ENCODE measurements at regions of chr10 and their contacts with region 1.

Region 1: GRCh38 chr10:33735464-33735923 is 401.0 kb upstream of the NRP1 start:
- DNase-seq: no peak
- ATAC-seq: peak; percentile 55
- H3K4me3 ChIP-seq: no peak overlapping the region
- H3K27ac ChIP-seq: no peak overlapping the region
- H3K4me1 ChIP-seq: no peaks in the 10 kb centered on the region
- H3K27me3 ChIP-seq: no peaks in the 10 kb centered on the region
- CTCF ChIP-seq: no peak
- EP300 ChIP-seq: no peak
- POLR2A ChIP-seq: no peak
- RAD21 ChIP-seq: no peak

Region 2: GRCh38 chr10:33715303-33715975 is 20.1 kb before region 1 on chr10:
- CTCF ChIA-PET with region 1: no interaction called
- POLR2A ChIA-PET with region 1: no interaction called
- RAD21 ChIA-PET with region 1: interaction called, 4 read pairs
- SMC1A ChIA-PET with region 1: interaction called, 17 read pairs
- in situ Hi-C with region 1: no loop called
- intact Hi-C with region 1: no loop called
- DNase-seq: no peak
- ATAC-seq: peak; percentile 77
- H3K4me3 ChIP-seq: no peak overlapping the region
- H3K27ac ChIP-seq: no peak overlapping the region
- H3K4me1 ChIP-seq: no peaks in the 10 kb centered on the region
- H3K27me3 ChIP-seq: no peaks in the 10 kb centered on the region
- CTCF ChIP-seq: no peak
- EP300 ChIP-seq: no peak
- POLR2A ChIP-seq: no peak
- RAD21 ChIP-seq: no peak

Region 3: GRCh38 chr10:33837736-33838135 is 102.2 kb after region 1 on chr10:
- CTCF ChIA-PET with region 1: no interaction called
- POLR2A ChIA-PET with region 1: no interaction called
- RAD21 ChIA-PET with region 1: no interaction called
- SMC1A ChIA-PET with region 1: no interaction called
- in situ Hi-C with region 1: no loop called
- intact Hi-C with region 1: no loop called
- DNase-seq: no peak
- ATAC-seq: no peak; the same call in 2 of the 3 replicates
- H3K4me3 ChIP-seq: no peak overlapping the region
- H3K27ac ChIP-seq: no peak overlapping the region
- H3K4me1 ChIP-seq: no peaks in the 10 kb centered on the region
- H3K27me3 ChIP-seq: no peaks in the 10 kb centered on the region
- CTCF ChIP-seq: no peak
- EP300 ChIP-seq: no peak
- POLR2A ChIP-seq: no peak
- RAD21 ChIP-seq: no peak